PC-9 (cell line): ENCODE measurements at regions of chr7 and their contacts with region 1.

Region 1: DNA sequence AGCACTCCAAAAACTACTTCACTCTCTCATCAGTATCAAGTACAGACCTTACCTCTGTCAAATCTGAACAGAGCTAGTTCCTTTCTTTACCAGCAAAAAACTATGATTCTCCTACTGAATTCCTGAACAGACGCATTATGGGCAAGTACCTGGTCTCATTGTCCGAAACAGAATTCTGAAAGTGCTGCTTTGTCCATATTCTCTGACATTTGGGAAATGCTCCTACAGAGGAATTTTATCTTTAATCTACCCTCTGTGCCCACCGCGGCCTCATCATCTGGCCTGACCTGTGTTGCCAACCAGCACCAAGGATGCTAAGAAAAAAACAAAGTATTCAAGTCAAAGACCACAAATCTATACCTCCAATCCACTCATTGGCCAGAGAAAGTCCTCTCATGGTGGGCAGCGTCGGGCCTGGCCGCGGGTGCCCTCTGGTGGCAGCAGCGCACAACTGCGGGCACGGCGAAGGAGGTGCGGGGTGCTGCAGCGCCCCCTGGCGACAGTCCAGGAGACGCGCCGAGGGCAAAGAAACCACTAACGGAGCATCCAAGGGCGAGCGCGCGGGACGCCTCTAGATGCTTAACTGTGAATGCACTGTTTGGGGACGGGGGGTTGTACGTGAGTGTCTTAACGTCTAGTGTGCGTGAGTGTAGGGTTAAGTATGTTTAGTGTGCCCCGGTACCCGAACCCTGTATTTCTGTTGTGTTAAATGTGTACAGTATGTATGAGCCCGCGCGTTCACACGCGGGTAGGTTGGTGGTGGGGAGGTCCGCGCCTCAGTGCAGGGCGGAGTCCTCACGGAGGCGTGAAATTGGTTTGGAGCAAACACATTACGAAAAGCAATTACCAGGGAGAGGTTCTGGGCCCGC is 5.0 kb upstream of the GBX1 start:
- DNase-seq: peak; percentile 46 to 82
- H3K4me3 ChIP-seq: no peak overlapping the region
- H3K27ac ChIP-seq: no peak overlapping the region
- H3K4me1 ChIP-seq: no peaks in the 10 kb centered on the region
- H3K27me3 ChIP-seq: peaks cover 61% of the 10 kb centered on the region
- CTCF ChIP-seq: peak; percentile 100

Region 2: GRCh38 chr7:150448789-150449147 is 723.7 kb before region 1 on chr7:
- CTCF ChIA-PET with region 1: no interaction called
- POLR2A ChIA-PET with region 1: no interaction called
- intact Hi-C with region 1: loop called (anchors 5 kb)
- DNase-seq: peak in 1 of 2 experiments; percentile 73
- H3K4me3 ChIP-seq: no peak overlapping the region
- H3K27ac ChIP-seq: no peak overlapping the region
- H3K4me1 ChIP-seq: no peaks in the 10 kb centered on the region
- H3K27me3 ChIP-seq: peaks cover 80% of the 10 kb centered on the region
- CTCF ChIP-seq: peak; percentile 95

Region 3: GRCh38 chr7:150876817-150877526 is 295.5 kb before region 1 on chr7:
- CTCF ChIA-PET with region 1: no interaction called
- POLR2A ChIA-PET with region 1: no interaction called
- intact Hi-C with region 1: loop called (anchors 5 kb)
- DNase-seq: peak; percentile 67 to 68
- H3K4me3 ChIP-seq: no peak overlapping the region
- H3K27ac ChIP-seq: no peak overlapping the region
- H3K4me1 ChIP-seq: no peaks in the 10 kb centered on the region
- H3K27me3 ChIP-seq: peaks cover 41% of the 10 kb centered on the region
- CTCF ChIP-seq: peak; percentile 49

Region 4: DNA sequence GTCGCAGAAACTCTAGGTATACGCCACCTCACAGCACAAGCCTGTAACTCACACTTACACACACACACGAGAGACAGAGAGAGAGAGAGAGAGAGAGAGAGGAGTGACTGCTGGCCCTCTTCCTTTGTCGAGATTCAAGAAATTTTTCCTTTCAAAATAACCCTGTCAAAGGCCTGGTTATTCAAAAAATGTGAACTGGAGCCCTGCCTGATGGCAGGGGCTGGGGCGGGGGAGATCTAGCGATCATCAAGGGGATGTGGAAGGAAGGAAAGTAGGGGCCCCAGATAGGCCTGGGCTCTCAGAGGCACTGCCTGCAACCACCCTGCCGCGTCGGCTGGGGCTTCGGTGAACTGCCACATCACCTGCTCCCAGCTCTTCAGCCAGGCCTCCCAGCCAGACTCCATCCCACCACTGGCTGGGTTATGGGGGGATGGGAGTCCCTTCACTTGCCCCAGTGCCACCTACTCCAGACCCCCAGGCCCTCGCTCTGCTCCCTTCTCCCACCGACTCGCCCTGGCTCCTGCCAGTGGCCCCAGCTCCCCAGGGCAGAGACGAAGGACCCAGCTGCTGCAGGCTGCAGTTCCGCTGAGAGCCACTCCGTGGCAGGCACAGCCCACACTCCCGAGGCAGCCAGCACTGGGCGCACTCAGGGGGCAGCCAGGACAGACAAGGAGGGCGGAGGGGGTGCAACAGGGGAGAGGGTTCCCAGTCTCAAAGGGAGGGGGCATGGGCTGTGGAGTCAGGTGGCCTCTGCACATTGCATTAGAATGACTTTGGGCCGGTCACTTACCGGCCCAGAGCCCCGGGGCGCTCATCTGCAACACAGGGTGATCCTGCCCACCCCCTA is 209.7 kb before region 1 on chr7:
- CTCF ChIA-PET with region 1: no interaction called
- POLR2A ChIA-PET with region 1: no interaction called
- intact Hi-C with region 1: loop called (anchors 1 kb)
- DNase-seq: peak in 1 of 2 experiments; percentile 61
- H3K4me3 ChIP-seq: no peak overlapping the region
- H3K27ac ChIP-seq: no peak overlapping the region
- H3K4me1 ChIP-seq: no peaks in the 10 kb centered on the region
- H3K27me3 ChIP-seq: peaks cover 45% of the 10 kb centered on the region
- CTCF ChIP-seq: peak; percentile 97

Region 5: GRCh38 chr7:151244196-151244840 is 71.8 kb after region 1 on chr7:
- CTCF ChIA-PET with region 1: no interaction called
- POLR2A ChIA-PET with region 1: no interaction called
- intact Hi-C with region 1: loop called (anchors 5 kb)
- DNase-seq: peak in 1 of 2 experiments; percentile 44
- H3K4me3 ChIP-seq: no peak overlapping the region
- H3K27ac ChIP-seq: no peak overlapping the region
- H3K4me1 ChIP-seq: no peaks in the 10 kb centered on the region; the same call in 1 of the 2 replicates
- H3K27me3 ChIP-seq: peaks cover 25% of the 10 kb centered on the region
- CTCF ChIP-seq: peak; percentile 95